Psoas muscle (tissue), 8 donors: ENCODE measurements at regions of chr9 and their contacts with region 1.

Region 1: DNA sequence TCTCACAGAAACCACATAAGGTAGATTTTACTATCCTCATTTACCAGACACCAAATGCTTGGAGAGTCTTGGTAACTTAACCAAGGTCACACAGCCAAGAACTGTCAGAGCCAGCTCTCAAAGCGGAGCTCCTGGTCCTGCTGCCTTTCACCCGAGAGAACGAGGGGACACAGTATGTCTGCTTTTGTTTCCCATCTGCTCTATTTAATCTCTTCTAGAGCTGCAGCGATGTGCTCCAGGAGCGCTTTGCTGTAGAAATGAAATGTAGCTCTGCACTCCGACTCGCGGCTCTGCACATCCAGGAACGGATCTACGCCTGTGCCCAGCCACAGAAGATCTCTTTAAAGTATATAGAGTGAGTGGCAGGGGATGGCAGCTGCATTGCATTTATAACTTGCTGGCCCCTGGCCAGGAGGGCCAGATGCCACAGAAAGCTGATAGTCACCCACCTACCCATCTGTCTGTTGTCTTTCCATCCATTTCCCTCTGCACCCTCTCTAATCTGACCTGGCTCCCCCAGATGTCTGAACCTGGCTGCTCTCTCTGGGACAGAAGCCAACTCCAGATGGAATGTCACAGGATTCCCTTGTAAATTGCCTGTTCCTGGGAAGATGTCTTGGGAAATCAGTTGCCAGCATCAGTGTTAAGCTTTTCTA is 21.4 kb upstream of the TRMT10B start:
- DNase-seq: no peak
- ATAC-seq: no peak
- H3K4me3 ChIP-seq: no peak overlapping the region
- H3K27ac ChIP-seq: no peak overlapping the region
- H3K4me1 ChIP-seq: no peaks in the 10 kb centered on the region
- H3K27me3 ChIP-seq: no peaks in the 10 kb centered on the region
- CTCF ChIP-seq: no peak

Region 2: DNA sequence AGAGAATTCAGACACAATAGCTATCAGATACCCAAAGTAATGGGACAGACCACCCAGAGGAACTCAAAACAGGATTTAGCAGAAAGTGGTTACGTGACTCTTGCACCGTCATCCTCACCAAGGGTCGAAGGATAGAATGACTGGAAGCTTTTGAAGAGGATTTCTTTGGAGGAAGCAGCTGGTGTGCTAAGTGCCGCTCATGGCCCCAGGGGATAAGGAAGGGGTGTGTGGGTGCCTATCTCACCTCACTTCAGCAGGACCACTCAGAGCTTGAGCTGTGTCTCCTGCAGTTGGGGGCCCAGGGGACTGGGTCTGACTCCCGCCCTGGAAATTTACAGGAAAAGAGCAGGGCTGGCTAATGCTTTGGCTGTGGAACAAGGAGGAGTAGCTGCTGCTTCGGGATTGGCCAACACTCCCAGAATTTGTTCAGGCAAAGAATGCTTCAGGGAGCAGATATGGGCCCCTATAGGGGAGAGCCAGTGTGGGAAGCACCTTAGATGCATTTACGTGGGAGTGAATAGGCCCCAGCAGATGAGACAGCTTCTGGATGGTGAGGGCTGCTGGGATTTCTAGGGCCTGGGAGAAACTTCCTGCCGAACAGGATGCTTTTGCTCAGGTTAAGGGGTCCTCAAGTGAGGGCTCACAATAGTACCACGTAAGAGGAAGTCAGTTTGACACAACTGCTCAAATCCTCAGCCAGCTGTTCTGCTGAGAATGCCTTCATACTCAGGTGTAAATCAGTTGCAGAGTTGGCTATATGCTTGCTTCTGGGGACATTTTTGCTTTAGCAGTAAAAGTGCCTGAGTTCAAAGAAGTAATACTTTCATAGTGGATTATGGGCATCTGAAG is 110.7 kb before region 1 on chr9:
- intact Hi-C with region 1: loop called in 1 of 2 experiments (anchors 10 kb)
- DNase-seq: no peak
- ATAC-seq: no peak
- H3K4me3 ChIP-seq: no peak overlapping the region
- H3K27ac ChIP-seq: no peak overlapping the region
- H3K4me1 ChIP-seq: no peaks in the 10 kb centered on the region
- H3K27me3 ChIP-seq: no peaks in the 10 kb centered on the region
- CTCF ChIP-seq: no peak

Region 3: DNA sequence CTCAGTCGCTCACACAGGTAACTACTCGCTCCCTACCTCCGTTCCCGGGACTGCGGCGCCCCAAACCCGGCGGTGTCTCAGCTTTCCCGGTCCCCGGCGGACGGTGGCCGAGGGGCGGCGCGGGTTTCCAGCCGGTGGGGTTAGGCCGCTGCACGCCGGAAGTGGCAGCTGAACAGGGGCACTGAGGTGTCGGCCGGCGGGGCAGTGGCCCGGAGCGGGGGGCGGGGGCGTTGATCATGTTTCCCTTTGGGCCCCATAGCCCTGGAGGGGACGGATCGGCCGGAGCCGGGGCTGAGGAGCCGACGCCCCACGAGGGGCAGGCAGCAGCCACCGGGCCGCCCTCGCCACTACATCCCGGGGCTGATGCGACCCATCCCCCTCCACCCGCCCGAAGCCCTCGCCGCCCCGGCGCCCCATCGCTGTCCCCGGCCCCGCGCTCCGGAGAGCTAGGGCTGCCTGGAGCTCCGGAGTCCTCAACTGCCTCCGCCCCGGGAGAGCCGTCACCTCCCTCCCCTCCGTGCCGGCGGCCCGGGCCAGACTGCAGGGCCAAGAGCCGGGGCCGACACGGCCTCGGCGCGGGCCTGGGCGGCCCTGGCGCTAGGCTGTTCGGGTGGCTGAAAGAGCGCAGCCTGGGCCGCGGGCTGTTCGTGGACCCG is 68.5 kb after region 1 on chr9 and contains the start of gene DCAF10:
- intact Hi-C with region 1: no loop called
- DNase-seq: peak; percentile 90 to 93
- ATAC-seq: peak; percentile 96 to 98 (median 97)
- H3K4me3 ChIP-seq: peak within 1 kb of the TSS; percentile 82
- H3K27ac ChIP-seq: peak within 1 kb of the TSS; percentile 82
- H3K4me1 ChIP-seq: peaks cover 21% of the 10 kb centered on the region
- H3K27me3 ChIP-seq: no peaks in the 10 kb centered on the region
- CTCF ChIP-seq: no peak
- total RNA-seq, gene DCAF10: 20.2 to 27.2 (median 22.4) TPM